ENCODE measurements at regions of chr2 and their contacts with region 1.

Region 1: DNA sequence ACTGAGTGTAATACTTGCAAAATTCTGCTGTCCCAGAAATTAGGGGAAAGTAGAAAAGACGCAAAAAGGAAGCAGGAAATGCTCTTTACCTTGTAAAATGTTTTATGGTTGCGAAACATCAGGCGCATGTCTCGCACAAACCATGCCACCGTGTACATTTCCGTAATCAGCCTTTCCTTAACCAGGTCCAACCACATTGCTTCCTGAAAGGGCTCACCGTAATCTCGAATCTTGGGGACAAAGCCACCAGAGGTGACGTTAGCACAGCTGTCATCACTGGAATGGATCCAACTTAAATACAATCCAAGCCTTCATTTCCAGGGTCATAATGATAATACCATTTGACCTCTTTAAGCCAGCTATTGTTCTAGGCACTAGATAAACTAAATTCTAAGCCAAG is 49.3 kb downstream of the SP110 start:
- DNase-seq: peak; percentile 24
- ATAC-seq: peak; percentile 55
- H3K4me3 Mint-ChIP-seq: no peak overlapping the region
- H3K27ac Mint-ChIP-seq: peak overlapping the region; percentile 23
- H3K4me1 Mint-ChIP-seq: peaks cover 10% of the 10 kb centered on the region
- H3K27me3 Mint-ChIP-seq: no peaks in the 10 kb centered on the region

Region 2: DNA sequence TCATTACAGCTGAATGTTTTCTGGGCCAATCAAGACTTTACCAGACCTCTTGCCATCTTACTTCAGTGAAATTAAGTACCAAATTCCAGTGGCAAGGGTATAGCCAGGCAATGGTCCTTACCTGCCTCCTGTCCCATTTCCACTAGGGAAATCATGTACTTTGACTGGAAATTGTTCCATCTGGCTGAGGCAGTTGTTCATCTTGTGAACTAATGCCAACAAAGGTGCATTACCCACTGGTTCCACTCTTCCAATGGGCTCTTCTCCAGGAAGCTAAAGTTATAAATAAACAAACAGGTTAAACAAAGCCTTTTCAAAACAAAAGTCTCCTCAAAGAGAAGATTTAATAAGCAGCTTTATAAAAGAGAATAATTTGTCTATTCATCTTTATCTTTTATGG is 375.5 kb before region 1 on chr2:
- CTCF ChIA-PET with region 1: no interaction called
- POLR2A ChIA-PET with region 1: no interaction called
- intact Hi-C with region 1: no loop called
- DNase-seq: no peak
- ATAC-seq: no peak
- H3K4me3 Mint-ChIP-seq: no peak overlapping the region
- H3K27ac Mint-ChIP-seq: no peak overlapping the region
- H3K4me1 Mint-ChIP-seq: peaks cover 4% of the 10 kb centered on the region
- H3K27me3 Mint-ChIP-seq: no peaks in the 10 kb centered on the region

Region 3: GRCh38 chr2:230160112-230160660 is 10.3 kb before region 1 on chr2:
- CTCF ChIA-PET with region 1: interaction called, 36 read pairs
- POLR2A ChIA-PET with region 1: no interaction called
- intact Hi-C with region 1: no loop called
- DNase-seq: peak; percentile 72
- ATAC-seq: peak; percentile 59
- H3K4me3 Mint-ChIP-seq: no peak overlapping the region
- H3K27ac Mint-ChIP-seq: no peak overlapping the region
- H3K4me1 Mint-ChIP-seq: peaks cover 8% of the 10 kb centered on the region
- H3K27me3 Mint-ChIP-seq: no peaks in the 10 kb centered on the region

Region 4: GRCh38 chr2:230286048-230286447 is 115.5 kb after region 1 on chr2:
- CTCF ChIA-PET with region 1: no interaction called
- POLR2A ChIA-PET with region 1: no interaction called
- intact Hi-C with region 1: no loop called
- DNase-seq: no peak
- ATAC-seq: no peak
- H3K4me3 Mint-ChIP-seq: no peak overlapping the region
- H3K27ac Mint-ChIP-seq: no peak overlapping the region
- H3K4me1 Mint-ChIP-seq: peaks cover 16% of the 10 kb centered on the region
- H3K27me3 Mint-ChIP-seq: no peaks in the 10 kb centered on the region

Region 5: GRCh38 chr2:230335451-230335863 is 164.9 kb after region 1 on chr2:
- CTCF ChIA-PET with region 1: no interaction called
- POLR2A ChIA-PET with region 1: no interaction called
- intact Hi-C with region 1: no loop called
- DNase-seq: no peak
- ATAC-seq: peak; percentile 68
- H3K4me3 Mint-ChIP-seq: peak overlapping the region; percentile 35
- H3K27ac Mint-ChIP-seq: peak overlapping the region; percentile 82
- H3K4me1 Mint-ChIP-seq: peaks cover 62% of the 10 kb centered on the region
- H3K27me3 Mint-ChIP-seq: no peaks in the 10 kb centered on the region